ENCODE measurements at regions of chr14 and their contacts with region 1.

Region 1: DNA sequence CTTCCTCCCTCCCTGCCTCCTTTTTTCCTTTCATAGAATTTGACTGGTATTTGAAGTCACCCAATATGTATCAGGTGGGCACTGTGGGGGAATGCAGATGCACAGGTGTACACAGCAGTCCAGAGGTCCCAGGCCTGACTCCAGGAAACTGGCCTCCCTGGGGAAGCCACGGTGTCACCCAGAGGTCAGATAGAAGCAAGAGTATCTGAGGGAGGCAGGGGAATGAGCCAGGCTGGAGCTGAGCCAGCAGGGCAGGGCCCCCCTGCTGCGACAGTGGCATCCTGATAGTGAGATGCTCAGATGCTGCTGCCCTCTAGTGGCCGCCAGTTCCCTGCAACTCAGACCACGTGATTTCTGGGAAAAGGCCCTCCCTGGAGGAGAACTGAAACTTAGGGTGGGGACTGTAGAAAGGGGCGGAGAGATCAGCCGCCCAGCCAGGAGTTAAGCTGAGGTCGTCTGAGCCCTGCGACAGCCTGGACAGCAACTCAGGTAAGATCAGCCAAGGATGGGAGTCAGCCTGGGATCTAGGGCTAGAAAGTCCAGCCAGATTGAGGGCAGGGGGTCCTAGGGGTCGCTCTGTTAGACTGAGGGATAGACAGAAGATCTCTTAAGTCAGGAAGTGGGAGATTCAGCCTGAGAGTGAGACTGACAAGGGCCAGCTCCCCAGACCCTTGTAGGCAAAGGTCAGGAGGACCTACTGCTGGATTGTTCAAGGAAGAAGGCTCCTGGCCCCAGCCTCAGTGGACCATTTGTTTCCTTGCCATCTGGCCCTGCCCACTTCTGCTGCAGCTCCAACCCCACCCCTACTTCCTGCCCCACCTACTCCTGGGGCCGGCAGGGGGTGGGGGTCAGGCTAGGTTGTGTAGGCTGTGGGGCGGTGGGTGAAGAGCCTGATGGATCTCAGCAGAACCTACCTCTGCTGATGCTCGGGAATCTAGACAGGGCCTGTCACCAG is at the start of gene IRF9:
- DNase-seq: peak; percentile 98
- ATAC-seq: peak; percentile 89
- H3K4me3 Mint-ChIP-seq: peak within 1 kb of the TSS; percentile 84
- H3K27ac Mint-ChIP-seq: peak within 1 kb of the TSS; percentile 97
- H3K4me1 Mint-ChIP-seq: peaks cover 35% of the 10 kb centered on the region
- H3K27me3 Mint-ChIP-seq: no peaks in the 10 kb centered on the region
- total RNA-seq, gene IRF9: 172 to 209 TPM

Region 2: DNA sequence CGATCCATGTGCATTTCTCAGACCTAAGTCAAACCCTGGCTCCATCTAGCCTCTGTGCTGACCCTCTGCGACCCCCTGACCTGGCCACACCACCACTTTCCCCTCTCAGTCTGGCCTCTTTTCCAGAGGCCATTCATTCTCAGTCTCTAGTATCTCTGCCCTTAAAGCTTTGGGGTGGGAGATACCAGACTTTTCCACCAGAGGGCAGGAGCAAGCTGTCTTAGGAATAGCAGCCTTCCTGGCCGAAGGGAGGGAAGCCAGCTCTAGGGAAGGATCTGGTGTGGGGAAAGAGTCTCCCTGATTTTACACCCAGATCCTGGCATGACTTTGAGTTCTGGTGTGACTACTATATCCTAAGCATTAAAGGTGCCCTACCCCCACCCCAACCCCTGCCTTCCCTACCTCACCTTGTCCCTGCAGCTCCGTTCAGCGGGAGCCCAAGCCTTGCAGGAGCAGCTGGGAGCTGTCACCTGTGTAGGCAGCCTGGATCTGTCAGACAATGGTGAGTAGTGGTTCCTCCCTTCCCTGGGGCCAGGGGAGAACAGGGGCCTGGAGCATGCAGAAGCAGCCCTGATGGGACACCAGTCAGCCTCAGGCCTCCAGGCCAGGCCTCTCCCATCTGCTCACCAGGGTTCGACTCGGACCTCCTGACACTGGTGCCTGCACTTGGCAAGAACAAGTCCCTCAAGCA is 102.7 kb before region 1 on chr14:
- CTCF ChIA-PET with region 1: interaction called, 3 read pairs
- POLR2A ChIA-PET with region 1: no interaction called
- intact Hi-C with region 1: loop called in 1 of 2 experiments (anchors 1 kb)
- DNase-seq: peak; percentile 73
- ATAC-seq: peak; percentile 63
- H3K4me3 Mint-ChIP-seq: no peak overlapping the region
- H3K27ac Mint-ChIP-seq: peak overlapping the region; percentile 40
- H3K4me1 Mint-ChIP-seq: peaks cover 4% of the 10 kb centered on the region
- H3K27me3 Mint-ChIP-seq: peaks cover 2% of the 10 kb centered on the region

Region 3: GRCh38 chr14:24135834-24136542 is 25.1 kb before region 1 on chr14 and contains the start of gene PSME1:
- CTCF ChIA-PET with region 1: interaction called, 15 read pairs
- POLR2A ChIA-PET with region 1: interaction called, 14 read pairs
- intact Hi-C with region 1: loop called (anchors 1 kb)
- DNase-seq: peak; percentile 98
- ATAC-seq: peak; percentile 95
- H3K4me3 Mint-ChIP-seq: peak within 1 kb of the TSS; percentile 92
- H3K27ac Mint-ChIP-seq: peak within 1 kb of the TSS; percentile 92
- H3K4me1 Mint-ChIP-seq: peaks cover 50% of the 10 kb centered on the region
- H3K27me3 Mint-ChIP-seq: no peaks in the 10 kb centered on the region
- total RNA-seq, gene PSME1: 414 to 418 TPM

Region 4: DNA sequence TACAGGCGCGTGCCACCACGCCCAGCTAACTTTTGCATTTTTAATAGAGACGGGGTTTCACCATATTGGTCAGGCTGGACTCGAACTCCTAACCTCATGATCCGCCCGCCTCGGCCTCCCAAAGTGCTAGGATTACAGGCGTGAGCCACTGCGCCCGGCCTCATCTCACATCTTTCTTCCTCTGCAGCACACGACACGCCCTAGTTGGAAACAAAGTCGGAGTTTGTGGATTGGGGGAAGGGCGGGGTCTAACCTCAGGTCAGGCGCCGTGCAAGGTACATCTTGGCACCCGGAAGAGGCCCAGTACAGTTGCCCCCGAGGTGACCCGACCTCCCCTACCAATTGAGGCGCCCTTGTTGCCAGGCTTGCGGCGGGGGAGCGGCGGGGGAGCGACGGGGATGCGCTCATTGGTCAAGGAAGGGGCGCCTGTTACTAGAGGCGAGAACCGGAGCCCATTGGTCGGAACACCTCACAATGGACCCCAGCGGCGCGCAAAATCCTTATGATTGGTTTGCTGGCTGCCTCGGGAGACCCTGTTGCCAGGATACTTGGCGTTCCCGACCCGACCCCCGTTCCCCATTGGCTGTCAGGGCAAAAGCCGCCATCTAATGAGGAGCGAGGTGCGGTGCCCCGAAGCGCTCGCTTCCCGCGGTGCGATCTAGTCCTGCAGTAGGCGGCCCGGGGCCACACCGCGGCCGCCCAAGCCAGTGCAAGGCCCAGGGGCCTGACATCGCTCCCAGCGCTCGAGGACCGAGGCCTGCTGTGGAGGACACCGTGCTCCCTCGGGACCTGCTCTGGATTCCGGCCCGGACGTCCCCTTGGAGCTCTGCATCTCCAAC is 10.5 kb after region 1 on chr14 and contains the start of gene REC8:
- CTCF ChIA-PET with region 1: interaction called, 10 read pairs
- POLR2A ChIA-PET with region 1: interaction called, 5 read pairs
- intact Hi-C with region 1: no loop called
- DNase-seq: peak; percentile 75
- ATAC-seq: peak; percentile 81
- H3K4me3 Mint-ChIP-seq: peak within 1 kb of the TSS; percentile 66
- H3K27ac Mint-ChIP-seq: peak within 1 kb of the TSS; percentile 69
- H3K4me1 Mint-ChIP-seq: peaks cover 31% of the 10 kb centered on the region
- H3K27me3 Mint-ChIP-seq: no peaks in the 10 kb centered on the region
- total RNA-seq, gene REC8: 25.6 to 27.7 TPM

Region 5: DNA sequence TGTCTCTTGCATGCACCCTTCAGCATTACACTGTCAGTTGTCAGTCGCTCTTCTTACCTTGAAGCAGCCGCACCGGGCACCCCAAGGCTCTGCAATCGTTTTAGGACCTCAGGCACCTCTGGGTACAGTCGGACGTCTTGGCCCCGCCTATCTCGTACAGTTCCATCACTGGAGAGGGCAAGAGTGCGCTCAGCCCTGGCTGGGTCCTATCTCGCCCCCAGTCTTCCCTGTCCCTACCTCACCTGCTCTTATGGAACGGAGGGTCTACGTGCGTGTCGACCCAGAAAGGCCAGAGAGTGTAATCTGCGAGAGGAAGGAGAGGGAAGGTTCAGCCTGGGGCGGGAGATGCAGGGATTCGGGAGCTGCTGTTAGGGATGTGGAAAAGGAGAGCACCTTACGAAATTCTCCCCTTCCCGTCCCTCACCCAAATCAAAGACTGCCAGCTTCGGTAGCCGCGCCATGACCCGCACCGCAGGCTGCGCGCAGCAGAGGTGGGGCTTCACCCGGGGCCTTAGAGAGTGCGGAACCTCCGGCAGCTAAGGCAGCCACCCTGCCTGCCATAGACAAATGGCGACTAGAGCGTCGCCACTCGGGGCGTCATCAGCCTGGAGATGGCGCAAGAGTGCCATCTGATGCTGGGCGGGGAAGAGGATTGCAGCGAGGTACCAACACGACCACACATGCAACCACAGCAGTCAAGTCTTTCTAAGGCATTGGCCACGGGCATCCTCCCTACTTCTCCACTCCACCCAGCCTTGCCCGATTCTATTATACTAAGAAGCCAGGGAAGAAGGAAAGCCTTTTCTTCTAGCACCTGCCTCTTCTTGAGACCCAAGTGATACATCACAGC is 54.6 kb after region 1 on chr14 and contains the start of gene MDP1:
- CTCF ChIA-PET with region 1: interaction called, 6 read pairs
- POLR2A ChIA-PET with region 1: interaction called, 7 read pairs
- intact Hi-C with region 1: loop called in 1 of 2 experiments (anchors 1 kb)
- DNase-seq: peak; percentile 93
- ATAC-seq: peak; percentile 76
- H3K4me3 Mint-ChIP-seq: peak within 1 kb of the TSS; percentile 92
- H3K27ac Mint-ChIP-seq: peak within 1 kb of the TSS; percentile 95
- H3K4me1 Mint-ChIP-seq: peaks cover 44% of the 10 kb centered on the region
- H3K27me3 Mint-ChIP-seq: no peaks in the 10 kb centered on the region
- total RNA-seq, gene MDP1: 4.5 to 11.7 TPM

Region 6: DNA sequence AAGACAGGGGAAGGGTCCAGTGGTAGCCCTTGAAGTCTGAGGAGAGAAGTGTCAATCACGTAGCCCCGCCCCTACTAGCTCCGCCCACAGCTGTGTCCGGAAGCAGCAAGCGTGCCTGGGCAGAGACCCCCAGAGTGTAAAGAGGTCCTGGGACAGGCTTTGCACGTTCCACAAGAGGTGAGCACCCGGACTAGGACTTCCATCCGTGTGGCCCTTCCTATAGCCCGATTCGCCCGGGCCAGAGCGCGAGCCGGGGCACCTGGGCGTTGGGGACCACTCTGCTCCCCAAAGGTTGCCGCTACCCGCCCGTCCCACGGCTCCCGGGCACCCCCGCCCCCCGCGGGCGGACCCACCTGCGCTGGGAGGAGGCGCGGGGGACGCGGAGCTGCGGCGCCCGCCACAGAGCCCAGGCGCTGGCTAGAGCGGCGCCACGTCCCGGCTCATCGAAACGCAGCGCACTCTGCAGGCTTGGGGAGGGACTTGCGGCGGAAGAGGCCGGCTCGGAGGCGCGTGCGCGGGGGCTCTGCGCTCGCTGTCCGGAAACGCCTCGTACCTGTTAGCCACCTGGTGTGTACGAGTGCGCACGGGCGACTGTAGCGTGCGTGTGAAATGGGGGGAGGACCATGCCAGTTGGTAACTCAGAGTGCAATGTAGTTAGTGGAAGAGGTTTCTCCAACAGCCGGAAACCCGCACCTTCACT is 110.2 kb after region 1 on chr14 and contains the start of gene RABGGTA:
- CTCF ChIA-PET with region 1: interaction called, 5 read pairs
- POLR2A ChIA-PET with region 1: interaction called, 4 read pairs
- intact Hi-C with region 1: loop called in 1 of 2 experiments (anchors 1 kb)
- DNase-seq: peak; percentile 94
- ATAC-seq: peak; percentile 85
- H3K4me3 Mint-ChIP-seq: peak within 1 kb of the TSS; percentile 83
- H3K27ac Mint-ChIP-seq: peak within 1 kb of the TSS; percentile 97
- H3K4me1 Mint-ChIP-seq: peaks cover 46% of the 10 kb centered on the region
- H3K27me3 Mint-ChIP-seq: no peaks in the 10 kb centered on the region
- total RNA-seq, gene RABGGTA: 52.1 to 56.0 TPM

Region 7: DNA sequence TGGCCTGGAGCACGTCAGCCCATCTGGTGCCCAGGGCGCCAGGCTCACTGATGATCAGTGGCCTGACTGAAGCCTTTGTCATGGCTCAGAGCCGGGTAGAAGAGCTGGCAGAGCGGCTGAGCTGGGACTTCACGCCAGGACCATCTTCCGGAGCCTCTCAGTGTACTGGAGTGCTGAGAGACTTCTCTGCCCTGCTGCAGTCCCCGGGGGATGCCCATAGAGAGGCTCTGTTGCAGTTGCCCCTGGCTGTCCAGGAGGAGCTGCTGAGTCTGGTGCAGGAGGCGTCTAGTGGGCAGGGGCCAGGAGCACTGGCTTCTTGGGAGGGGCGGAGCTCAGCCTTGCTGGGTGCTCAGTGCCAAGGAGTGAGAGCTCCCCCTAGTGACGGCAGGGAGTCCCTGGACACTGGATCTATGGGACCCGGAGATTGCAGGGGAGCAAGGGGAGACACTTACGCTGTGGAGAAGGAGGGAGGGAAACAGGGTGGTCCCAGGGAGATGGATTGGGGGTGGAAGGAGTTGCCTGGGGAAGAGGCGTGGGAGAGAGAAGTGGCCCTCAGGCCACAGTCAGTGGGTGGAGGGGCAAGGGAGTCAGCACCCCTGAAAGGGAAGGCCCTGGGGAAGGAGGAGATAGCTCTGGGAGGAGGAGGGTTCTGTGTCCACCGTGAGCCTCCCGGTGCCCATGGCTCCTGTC is 270.6 kb after region 1 on chr14:
- CTCF ChIA-PET with region 1: interaction called, 4 read pairs
- POLR2A ChIA-PET with region 1: no interaction called
- intact Hi-C with region 1: loop called in 1 of 2 experiments (anchors 1 kb)
- DNase-seq: peak; percentile 96
- ATAC-seq: peak; percentile 70
- H3K4me3 Mint-ChIP-seq: peak overlapping the region; percentile 94
- H3K27ac Mint-ChIP-seq: peak overlapping the region; percentile 97
- H3K4me1 Mint-ChIP-seq: peaks cover 31% of the 10 kb centered on the region
- H3K27me3 Mint-ChIP-seq: no peaks in the 10 kb centered on the region

Region 8: DNA sequence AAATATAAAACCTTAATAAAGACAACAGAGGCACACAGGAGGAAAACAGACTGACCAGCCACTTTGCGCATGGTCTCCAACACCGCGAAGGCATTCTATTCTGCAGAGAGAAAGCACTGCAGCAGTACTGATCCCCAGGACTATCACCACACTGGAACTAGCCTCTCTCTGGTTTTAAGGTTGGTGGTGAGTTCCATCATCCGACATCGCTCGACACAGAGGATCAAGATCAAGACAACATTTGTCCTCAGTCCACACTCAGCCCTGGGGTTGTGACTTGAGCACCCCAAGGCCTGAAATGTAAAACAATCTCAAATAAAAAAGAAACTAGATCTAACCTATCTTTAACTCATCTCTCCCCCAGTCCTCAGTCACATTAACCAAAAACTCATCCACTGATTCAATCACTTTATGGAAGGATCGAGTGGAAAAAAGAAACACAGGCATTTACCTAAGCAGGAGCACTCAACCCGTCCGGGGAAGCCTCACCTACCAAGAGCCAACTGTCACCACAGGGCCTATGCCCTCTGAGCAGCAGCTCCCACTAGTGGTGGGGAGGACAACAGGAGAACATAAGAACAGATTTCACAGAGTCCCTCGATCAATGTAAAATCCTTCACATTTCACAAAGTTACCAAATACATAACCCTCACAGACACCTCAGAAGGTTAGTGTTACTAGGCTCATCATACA is 871.1 kb after region 1 on chr14:
- CTCF ChIA-PET with region 1: no interaction called
- POLR2A ChIA-PET with region 1: no interaction called
- intact Hi-C with region 1: no loop called
- DNase-seq: peak; percentile 20
- ATAC-seq: no peak
- H3K4me3 Mint-ChIP-seq: no peak overlapping the region
- H3K27ac Mint-ChIP-seq: no peak overlapping the region
- H3K4me1 Mint-ChIP-seq: no peaks in the 10 kb centered on the region
- H3K27me3 Mint-ChIP-seq: no peaks in the 10 kb centered on the region